AG04450 (cell line): ENCODE measurements at regions of chr15 and their contacts with region 1.

Region 1: DNA sequence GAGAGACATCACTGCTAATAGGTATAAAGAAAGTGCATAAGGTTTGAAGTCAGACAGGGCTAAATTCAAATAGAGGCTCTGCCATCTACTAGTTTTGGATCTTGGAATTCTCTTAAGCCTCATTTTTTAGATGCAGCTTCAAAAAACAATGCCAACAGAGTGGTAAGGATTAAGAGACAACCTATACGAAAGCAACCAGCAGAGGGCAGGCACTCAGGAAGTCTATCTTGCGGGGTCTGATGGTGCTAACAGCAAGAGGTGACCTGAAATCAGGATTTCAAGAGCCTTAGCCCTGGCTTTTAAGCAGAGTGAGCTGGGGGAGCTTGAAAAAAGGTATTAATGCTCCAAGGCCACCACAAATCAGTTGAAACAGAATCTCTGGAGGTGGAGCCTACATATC is 40.7 kb downstream of the LDHAL6B start:
- DNase-seq: peak; percentile 50
- H3K4me3 ChIP-seq: no peak overlapping the region
- H3K27ac ChIP-seq: no peak overlapping the region
- H3K27me3 ChIP-seq: no peaks in the 10 kb centered on the region
- CTCF ChIP-seq: peak; percentile 76

Region 2: GRCh38 chr15:59230531-59231055 is 16.8 kb before region 1 on chr15:
- CTCF ChIA-PET with region 1: interaction called, 17 read pairs
- POLR2A ChIA-PET with region 1: no interaction called
- DNase-seq: no peak
- H3K4me3 ChIP-seq: no peak overlapping the region
- H3K27ac ChIP-seq: no peak overlapping the region
- H3K27me3 ChIP-seq: no peaks in the 10 kb centered on the region
- CTCF ChIP-seq: no peak

Region 3: GRCh38 chr15:59278120-59278519 is 30.8 kb after region 1 on chr15:
- CTCF ChIA-PET with region 1: interaction called, 19 read pairs
- POLR2A ChIA-PET with region 1: no interaction called
- DNase-seq: no peak
- H3K4me3 ChIP-seq: no peak overlapping the region
- H3K27ac ChIP-seq: no peak overlapping the region
- H3K27me3 ChIP-seq: no peaks in the 10 kb centered on the region
- CTCF ChIP-seq: no peak

Region 4: DNA sequence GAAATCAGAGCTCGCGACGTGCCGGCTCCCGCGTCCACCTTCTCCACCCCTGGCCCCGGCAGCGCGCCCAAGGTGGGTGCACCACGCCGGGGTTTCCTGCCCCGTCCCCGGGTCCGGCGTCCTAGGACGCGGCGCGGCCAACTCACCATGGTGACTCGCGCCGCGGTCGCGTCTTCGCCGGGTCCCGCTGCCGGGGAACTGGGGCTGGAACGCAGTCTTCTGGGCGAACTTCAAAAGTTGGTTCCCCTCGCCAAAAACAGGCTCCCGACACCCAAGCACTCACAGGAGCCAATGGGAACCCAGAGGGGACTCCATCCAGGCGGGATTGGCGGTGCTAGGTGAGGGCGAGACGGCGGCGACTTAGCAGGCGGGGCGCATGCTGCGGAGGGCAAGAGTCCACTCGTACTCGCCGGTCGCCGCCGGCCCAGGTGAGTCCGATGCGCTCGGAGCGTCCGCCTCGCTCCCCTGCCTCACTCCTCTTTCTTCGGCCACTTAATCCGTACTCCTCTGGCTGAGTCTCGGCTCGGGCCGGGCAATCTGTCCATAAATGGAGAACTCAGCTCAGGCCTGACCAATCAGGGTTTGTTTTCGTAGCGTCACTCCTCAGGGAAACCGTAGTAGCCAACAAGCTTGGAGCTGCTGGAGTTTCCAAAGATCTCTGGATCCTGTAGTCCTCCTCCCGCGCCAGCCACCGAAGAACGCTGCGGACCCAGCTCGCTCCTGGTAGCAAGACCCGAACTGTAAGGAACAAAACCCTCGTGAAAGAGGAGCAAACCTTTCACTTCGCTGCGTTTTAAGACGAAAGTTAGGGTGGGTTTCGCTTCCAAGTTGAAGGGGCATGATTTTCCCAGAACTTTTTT is 125.2 kb after region 1 on chr15 and contains the start of gene MYO1E:
- CTCF ChIA-PET with region 1: interaction called, 11 read pairs
- POLR2A ChIA-PET with region 1: interaction called, 4 read pairs
- DNase-seq: peak; percentile 94
- H3K4me3 ChIP-seq: peak within 1 kb of the TSS; percentile 81
- H3K27ac ChIP-seq: peak within 1 kb of the TSS; percentile 98
- H3K27me3 ChIP-seq: no peaks in the 10 kb centered on the region
- CTCF ChIP-seq: no peak
- polyA plus RNA-seq, gene MYO1E: 44.6 and 49.1 TPM in 2 replicates

Region 5: GRCh38 chr15:59492389-59493377 is 245.3 kb after region 1 on chr15:
- CTCF ChIA-PET with region 1: interaction called, 37 read pairs
- POLR2A ChIA-PET with region 1: no interaction called
- DNase-seq: peak; percentile 21
- H3K4me3 ChIP-seq: no peak overlapping the region
- H3K27ac ChIP-seq: no peak overlapping the region
- H3K27me3 ChIP-seq: no peaks in the 10 kb centered on the region
- CTCF ChIP-seq: peak; percentile 87